CD4-positive, alpha-beta T cell (primary cell): ENCODE measurements at regions of chr14 and their contacts with region 1.

Region 1: DNA sequence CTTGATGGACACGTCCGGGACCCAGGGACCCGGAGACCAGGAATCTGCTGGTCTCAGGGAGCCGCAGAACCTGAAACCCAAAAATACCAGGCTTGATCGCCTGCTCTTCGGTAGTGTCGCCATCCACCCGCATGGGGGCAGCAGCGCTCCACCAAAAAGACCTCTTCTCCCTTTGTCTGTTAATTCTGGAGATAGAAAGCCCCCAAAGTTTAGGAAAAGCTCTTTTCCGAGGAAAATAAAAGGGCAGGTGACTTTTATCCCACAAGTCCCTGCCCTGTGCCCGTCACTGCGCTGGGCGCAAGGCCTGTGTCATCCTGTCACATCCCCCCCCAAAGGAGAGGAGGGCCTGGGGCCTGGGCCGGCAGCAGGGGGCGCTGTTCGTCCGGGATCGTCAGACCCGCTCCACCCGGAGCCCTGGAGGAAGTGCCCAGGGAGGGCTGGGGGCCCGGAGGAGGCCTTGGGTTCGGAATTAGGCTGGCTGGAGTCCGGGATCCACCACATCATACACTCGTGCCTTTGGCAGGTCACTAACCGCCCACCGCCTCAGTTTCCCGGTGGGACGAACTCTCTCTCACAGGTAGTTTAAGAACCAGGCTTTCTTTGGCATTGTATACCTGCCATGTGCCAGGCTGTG is 31.9 kb downstream of the DAD1 start:
- DNase-seq: peak; percentile 83 to 98 (median 92)
- ATAC-seq: peak; percentile 24
- H3K4me3 ChIP-seq: peak overlapping the region; percentile 58
- H3K4me3 Mint-ChIP-seq: peak overlapping the region; percentile 96
- H3K27ac ChIP-seq: peak overlapping the region; percentile 99
- H3K27ac Mint-ChIP-seq: peak overlapping the region; percentile 97
- H3K4me1 ChIP-seq: peaks cover 100% of the 10 kb centered on the region
- H3K4me1 Mint-ChIP-seq: peaks cover 93% of the 10 kb centered on the region
- H3K27me3 ChIP-seq: no peaks in the 10 kb centered on the region
- H3K27me3 Mint-ChIP-seq: peaks cover 6% of the 10 kb centered on the region
- CTCF ChIP-seq: peak; percentile 100

Region 2: GRCh38 chr14:21643407-21643806 is 913.7 kb before region 1 on chr14:
- CTCF ChIA-PET with region 1: no interaction called
- POLR2A ChIA-PET with region 1: interaction called, 4 read pairs
- intact Hi-C with region 1: loop called in 1 of 2 experiments (anchors 5 kb)
- DNase-seq: no peak
- ATAC-seq: peak; percentile 29
- H3K4me3 ChIP-seq: peak overlapping the region; percentile 17
- H3K4me3 Mint-ChIP-seq: no peak overlapping the region
- H3K27ac ChIP-seq: no peak overlapping the region
- H3K27ac Mint-ChIP-seq: no peak overlapping the region
- H3K4me1 ChIP-seq: no peaks in the 10 kb centered on the region
- H3K4me1 Mint-ChIP-seq: peaks cover 5% of the 10 kb centered on the region
- H3K27me3 ChIP-seq: no peaks in the 10 kb centered on the region
- H3K27me3 Mint-ChIP-seq: peaks cover 7% of the 10 kb centered on the region
- CTCF ChIP-seq: no peak

Region 3: DNA sequence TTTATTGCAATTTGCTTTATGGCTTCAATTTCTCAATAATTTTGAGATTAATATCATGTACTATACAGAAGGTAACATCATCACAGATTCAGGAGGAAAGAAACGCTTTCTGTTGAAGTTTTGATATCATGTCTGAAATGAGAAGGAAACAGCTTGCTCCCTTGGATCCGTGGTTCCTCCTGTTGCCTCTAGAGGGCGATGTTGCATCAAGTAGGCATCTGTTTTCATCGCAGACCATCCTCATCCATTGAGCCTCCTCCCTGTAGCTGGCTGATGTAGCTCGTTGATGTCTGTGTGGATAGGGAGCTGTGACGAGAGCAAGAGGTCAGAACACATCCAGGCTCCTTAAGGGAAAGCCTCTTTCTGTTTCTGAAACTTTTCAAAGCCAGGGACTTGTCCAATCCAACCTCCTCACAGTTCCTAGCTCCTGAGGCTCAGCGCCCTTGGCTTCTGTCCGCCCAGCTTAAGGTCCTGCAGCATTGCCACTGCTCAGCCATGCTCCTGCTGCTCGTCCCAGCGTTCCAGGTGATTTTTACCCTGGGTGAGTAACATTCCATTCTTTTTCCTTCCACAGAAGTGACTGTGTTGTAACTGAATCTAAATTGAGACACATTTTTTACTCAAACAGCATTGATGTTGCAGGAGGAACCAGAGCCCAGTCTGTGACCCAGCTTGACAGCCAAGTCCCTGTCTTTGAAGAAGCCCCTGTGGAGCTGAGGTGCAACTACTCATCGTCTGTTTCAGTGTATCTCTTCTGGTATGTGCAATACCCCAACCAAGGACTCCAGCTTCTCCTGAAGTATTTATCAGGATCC is 578.7 kb before region 1 on chr14:
- CTCF ChIA-PET with region 1: interaction called, 16 read pairs
- POLR2A ChIA-PET with region 1: interaction called, 15 read pairs
- intact Hi-C with region 1: no loop called
- DNase-seq: peak; percentile 24 to 81 (median 52)
- ATAC-seq: peak; percentile 82
- H3K4me3 ChIP-seq: peak overlapping the region; percentile 40
- H3K4me3 Mint-ChIP-seq: peak overlapping the region; percentile 67
- H3K27ac ChIP-seq: no peak overlapping the region
- H3K27ac Mint-ChIP-seq: peak overlapping the region; percentile 77
- H3K4me1 ChIP-seq: peaks cover 4% of the 10 kb centered on the region
- H3K4me1 Mint-ChIP-seq: peaks cover 50% of the 10 kb centered on the region
- H3K27me3 ChIP-seq: no peaks in the 10 kb centered on the region
- H3K27me3 Mint-ChIP-seq: no peaks in the 10 kb centered on the region
- CTCF ChIP-seq: peak; percentile 75

Region 4: DNA sequence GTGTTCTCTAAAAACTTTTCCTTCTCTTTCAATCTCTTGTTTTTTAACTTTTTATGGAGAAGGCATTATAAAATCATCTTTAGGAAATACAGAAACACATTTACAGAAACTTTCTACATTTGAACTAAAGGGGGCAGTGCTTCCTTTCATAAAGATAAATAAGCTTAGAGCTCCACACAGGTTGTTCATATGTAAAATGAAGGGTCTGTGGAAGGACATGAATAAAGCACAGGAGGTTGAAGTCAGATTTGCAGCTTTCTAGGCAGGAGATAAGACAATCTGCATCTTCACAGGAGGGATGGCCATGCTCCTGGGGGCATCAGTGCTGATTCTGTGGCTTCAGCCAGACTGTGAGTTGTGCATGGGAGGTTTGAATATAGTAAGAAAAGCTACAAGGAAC is 394.1 kb before region 1 on chr14:
- CTCF ChIA-PET with region 1: interaction called, 5 read pairs
- POLR2A ChIA-PET with region 1: interaction called, 5 read pairs
- intact Hi-C with region 1: loop called in 1 of 2 experiments (anchors 10 kb)
- DNase-seq: peak in 3 of 14 experiments; percentile 32 to 43 (median 35)
- ATAC-seq: peak; percentile 61
- H3K4me3 ChIP-seq: peak overlapping the region; percentile 37
- H3K4me3 Mint-ChIP-seq: peak overlapping the region; percentile 91
- H3K27ac ChIP-seq: no peak overlapping the region
- H3K27ac Mint-ChIP-seq: peak overlapping the region; percentile 82
- H3K4me1 ChIP-seq: no peaks in the 10 kb centered on the region
- H3K4me1 Mint-ChIP-seq: peaks cover 8% of the 10 kb centered on the region
- H3K27me3 ChIP-seq: no peaks in the 10 kb centered on the region
- H3K27me3 Mint-ChIP-seq: no peaks in the 10 kb centered on the region
- CTCF ChIP-seq: no peak

Region 5: GRCh38 chr14:22505697-22506377 is 51.3 kb before region 1 on chr14:
- CTCF ChIA-PET with region 1: interaction called, 13 read pairs
- POLR2A ChIA-PET with region 1: interaction called, 613 read pairs
- intact Hi-C with region 1: no loop called
- DNase-seq: peak in 5 of 14 experiments; percentile 26 to 65 (median 56)
- ATAC-seq: peak; percentile 36
- H3K4me3 ChIP-seq: peak overlapping the region; percentile 61
- H3K4me3 Mint-ChIP-seq: peak overlapping the region; percentile 77
- H3K27ac ChIP-seq: peak overlapping the region; percentile 77 to 99
- H3K27ac Mint-ChIP-seq: peak overlapping the region; percentile 93
- H3K4me1 ChIP-seq: peaks cover 45% of the 10 kb centered on the region
- H3K4me1 Mint-ChIP-seq: peaks cover 79% of the 10 kb centered on the region
- H3K27me3 ChIP-seq: no peaks in the 10 kb centered on the region
- H3K27me3 Mint-ChIP-seq: no peaks in the 10 kb centered on the region
- CTCF ChIP-seq: no peak

Region 6: DNA sequence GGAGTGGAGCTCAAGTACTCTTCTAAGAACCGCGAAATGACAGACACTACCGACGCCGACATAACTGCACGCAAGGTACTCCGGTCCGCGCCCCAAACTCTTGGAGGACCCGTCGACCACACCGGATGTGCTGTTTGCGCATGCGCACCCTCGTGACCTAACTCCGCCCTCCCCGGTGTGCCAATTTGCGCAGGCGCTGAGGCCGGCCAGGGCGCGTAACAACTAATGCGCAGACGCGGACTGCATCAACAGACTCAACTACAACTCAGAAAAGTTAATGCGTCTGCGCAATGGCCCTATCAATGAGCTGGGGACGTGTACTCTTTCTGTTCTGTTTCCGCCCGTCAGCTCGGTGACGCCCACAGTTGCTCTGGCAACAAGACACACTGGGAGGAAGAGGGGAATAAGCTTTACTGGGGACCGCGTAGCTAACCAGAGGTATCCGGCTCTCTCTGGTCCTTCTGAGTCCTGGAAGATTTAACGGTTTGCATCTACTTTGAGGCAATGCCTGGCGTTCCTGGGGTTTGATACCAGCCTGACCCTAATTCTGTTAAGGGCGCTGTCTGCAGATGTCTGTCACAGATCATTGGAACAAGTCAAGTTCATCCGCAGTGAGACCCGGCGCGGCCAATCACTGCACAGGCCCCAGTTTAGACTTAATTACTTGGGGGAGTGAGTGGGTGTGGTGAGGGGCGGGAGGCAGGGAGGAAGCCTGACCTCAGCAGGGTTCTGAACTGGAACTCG is 32.2 kb after region 1 on chr14 and contains the start of gene DAD1:
- CTCF ChIA-PET with region 1: interaction called, 12 read pairs
- POLR2A ChIA-PET with region 1: interaction called, 137 read pairs
- intact Hi-C with region 1: loop called in 1 of 2 experiments (anchors 2 kb)
- DNase-seq: peak; percentile 98 to 100 (median 100)
- ATAC-seq: peak; percentile 87
- H3K4me3 ChIP-seq: peak within 1 kb of the TSS; percentile 82
- H3K4me3 Mint-ChIP-seq: peak within 1 kb of the TSS; percentile 96
- H3K27ac ChIP-seq: peak within 1 kb of the TSS; percentile 92 to 96
- H3K27ac Mint-ChIP-seq: peak within 1 kb of the TSS; percentile 98
- H3K4me1 ChIP-seq: peaks cover 39% of the 10 kb centered on the region
- H3K4me1 Mint-ChIP-seq: peaks cover 60% of the 10 kb centered on the region
- H3K27me3 ChIP-seq: no peaks in the 10 kb centered on the region
- H3K27me3 Mint-ChIP-seq: no peaks in the 10 kb centered on the region
- CTCF ChIP-seq: no peak
- total RNA-seq, gene DAD1: 41.8 to 44.1 TPM

Region 7: DNA sequence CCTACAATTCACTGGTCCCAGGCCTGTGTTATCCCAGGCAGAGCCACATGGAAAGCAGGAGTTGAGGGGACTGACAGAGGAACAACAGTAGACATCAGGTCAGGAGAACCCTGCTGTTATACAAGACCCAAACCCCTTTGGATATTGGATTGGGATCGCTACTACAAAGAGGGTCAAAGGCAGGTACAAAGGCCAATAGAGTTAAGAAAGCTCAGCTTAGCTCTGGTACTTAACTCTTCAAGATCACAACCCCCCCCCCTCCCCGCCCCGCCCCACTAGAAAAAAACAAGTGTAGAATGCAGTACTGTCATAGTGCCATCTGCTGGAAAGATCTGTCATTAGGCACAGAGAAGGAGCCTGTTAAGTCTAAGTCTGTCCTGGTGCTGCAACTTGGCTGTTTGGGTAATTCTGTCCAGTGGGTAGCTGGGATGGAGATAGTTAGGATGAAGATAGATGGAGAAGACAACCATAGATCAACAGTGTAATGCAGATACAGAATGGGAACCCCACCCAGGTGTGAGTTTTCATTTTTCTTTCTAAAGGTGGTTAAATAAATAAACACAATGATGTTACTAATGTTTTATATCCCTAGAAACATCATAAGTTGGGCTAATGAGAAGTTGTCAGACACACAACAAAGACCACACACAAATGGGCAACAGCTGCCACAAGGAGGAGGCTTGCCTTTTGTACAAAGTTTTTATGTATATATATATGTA is 343.1 kb after region 1 on chr14:
- CTCF ChIA-PET with region 1: interaction called, 4 read pairs
- POLR2A ChIA-PET with region 1: no interaction called
- intact Hi-C with region 1: loop called in 1 of 2 experiments (anchors 1 kb)
- DNase-seq: peak in 13 of 14 experiments; percentile 14 to 87 (median 36)
- ATAC-seq: peak; percentile 92
- H3K4me3 ChIP-seq: no peak overlapping the region
- H3K4me3 Mint-ChIP-seq: no peak overlapping the region
- H3K27ac ChIP-seq: no peak overlapping the region
- H3K27ac Mint-ChIP-seq: no peak overlapping the region
- H3K4me1 ChIP-seq: peaks cover 13% of the 10 kb centered on the region
- H3K4me1 Mint-ChIP-seq: peaks cover 15% of the 10 kb centered on the region
- H3K27me3 ChIP-seq: no peaks in the 10 kb centered on the region
- H3K27me3 Mint-ChIP-seq: no peaks in the 10 kb centered on the region
- CTCF ChIP-seq: peak; percentile 68